ENCODE measurements at regions of chr5 and their contacts with region 1.

Region 1: GRCh38 chr5:43040287-43041098 is at the start of gene ANXA2R:
- DNase-seq: peak in 1 of 2 donors; percentile 93
- H3K4me3 ChIP-seq: peak within 1 kb of the TSS; percentile 64 to 91
- H3K27ac ChIP-seq: peak within 1 kb of the TSS; percentile 96 to 99
- H3K4me1 ChIP-seq: peaks cover 0 to 2% of the 10 kb centered on the region in 2 donors
- H3K27me3 ChIP-seq: no peaks in the 10 kb centered on the region
- CTCF ChIP-seq: peak; percentile 58 to 74 (median 66)
- total RNA-seq, gene ANXA2R: 5.1 TPM

Region 2: DNA sequence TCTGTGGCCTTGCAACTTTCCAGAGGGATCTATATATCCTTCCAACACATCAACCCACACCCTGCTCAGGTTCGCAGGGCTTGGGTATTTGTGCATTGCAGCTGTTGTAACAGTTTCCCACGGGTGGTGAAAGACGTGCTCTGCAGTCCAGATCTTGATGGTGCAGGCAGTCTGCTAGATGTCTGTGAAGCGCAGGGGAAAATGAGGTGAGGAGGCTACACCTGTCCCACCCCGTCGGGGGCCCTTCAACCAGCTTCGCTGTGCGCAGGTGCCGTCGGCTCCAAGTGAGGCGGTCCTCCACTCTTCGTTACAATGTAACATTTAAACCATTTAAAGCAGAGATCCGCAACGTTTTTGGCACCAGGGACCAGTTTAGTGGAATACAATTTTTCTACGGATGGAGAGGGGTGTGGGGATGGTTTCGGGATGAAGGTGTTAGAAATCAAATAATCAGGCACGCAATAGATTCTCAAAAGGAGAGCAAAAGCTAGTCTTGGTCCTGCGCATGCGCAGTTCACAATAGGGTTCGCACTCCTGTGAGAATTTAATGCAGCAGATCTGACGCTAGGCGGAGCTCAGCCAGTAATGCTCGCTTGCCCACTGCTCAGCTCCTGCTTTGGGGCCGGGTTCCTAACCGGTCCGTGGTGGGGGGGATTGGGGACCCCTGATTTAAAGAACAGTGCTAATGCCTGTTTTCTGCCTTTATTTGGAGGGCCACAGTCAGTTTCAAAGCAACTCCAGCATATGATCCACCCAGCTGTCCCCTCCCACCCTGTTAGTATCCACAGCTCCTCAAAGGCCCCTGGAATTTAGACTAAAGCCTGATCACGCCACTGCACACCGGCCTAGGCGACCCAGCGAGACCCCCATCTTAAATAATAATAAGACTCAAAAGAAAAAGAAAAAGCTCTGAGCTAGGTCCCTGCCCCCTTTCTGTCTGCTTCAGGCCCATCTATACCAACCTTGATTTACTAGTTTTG is 131.7 kb before region 1 on chr5:
- intact Hi-C with region 1: loop called (anchors 1 kb)
- DNase-seq: peak; percentile 50 to 94
- H3K4me3 ChIP-seq: peak overlapping the region; percentile 49 to 63
- H3K27ac ChIP-seq: no peak overlapping the region
- H3K4me1 ChIP-seq: peaks cover 0 to 5% of the 10 kb centered on the region in 2 donors
- H3K27me3 ChIP-seq: no peaks in the 10 kb centered on the region
- CTCF ChIP-seq: peak; percentile 76 to 87 (median 78)

Region 3: GRCh38 chr5:42994246-42995151 is 46.0 kb before region 1 on chr5:
- intact Hi-C with region 1: loop called (anchors 2 kb)
- DNase-seq: peak in 1 of 2 donors; percentile 94
- H3K4me3 ChIP-seq: peak overlapping the region; percentile 52 to 72
- H3K27ac ChIP-seq: peak overlapping the region; percentile 90 to 97
- H3K4me1 ChIP-seq: peaks cover 0 to 4% of the 10 kb centered on the region in 2 donors
- H3K27me3 ChIP-seq: no peaks in the 10 kb centered on the region
- CTCF ChIP-seq: peak; percentile 84 to 88 (median 85)

Region 4: GRCh38 chr5:43019614-43020293 is 20.7 kb before region 1 on chr5:
- intact Hi-C with region 1: loop called (anchors 1 kb)
- DNase-seq: peak in 1 of 2 donors; percentile 83
- H3K4me3 ChIP-seq: peak overlapping the region; percentile 71 to 75
- H3K27ac ChIP-seq: peak overlapping the region; percentile 43 to 49
- H3K4me1 ChIP-seq: no peaks in the 10 kb centered on the region
- H3K27me3 ChIP-seq: no peaks in the 10 kb centered on the region
- CTCF ChIP-seq: peak in 2 of 3 experiments; percentile 19 to 34

Region 5: DNA sequence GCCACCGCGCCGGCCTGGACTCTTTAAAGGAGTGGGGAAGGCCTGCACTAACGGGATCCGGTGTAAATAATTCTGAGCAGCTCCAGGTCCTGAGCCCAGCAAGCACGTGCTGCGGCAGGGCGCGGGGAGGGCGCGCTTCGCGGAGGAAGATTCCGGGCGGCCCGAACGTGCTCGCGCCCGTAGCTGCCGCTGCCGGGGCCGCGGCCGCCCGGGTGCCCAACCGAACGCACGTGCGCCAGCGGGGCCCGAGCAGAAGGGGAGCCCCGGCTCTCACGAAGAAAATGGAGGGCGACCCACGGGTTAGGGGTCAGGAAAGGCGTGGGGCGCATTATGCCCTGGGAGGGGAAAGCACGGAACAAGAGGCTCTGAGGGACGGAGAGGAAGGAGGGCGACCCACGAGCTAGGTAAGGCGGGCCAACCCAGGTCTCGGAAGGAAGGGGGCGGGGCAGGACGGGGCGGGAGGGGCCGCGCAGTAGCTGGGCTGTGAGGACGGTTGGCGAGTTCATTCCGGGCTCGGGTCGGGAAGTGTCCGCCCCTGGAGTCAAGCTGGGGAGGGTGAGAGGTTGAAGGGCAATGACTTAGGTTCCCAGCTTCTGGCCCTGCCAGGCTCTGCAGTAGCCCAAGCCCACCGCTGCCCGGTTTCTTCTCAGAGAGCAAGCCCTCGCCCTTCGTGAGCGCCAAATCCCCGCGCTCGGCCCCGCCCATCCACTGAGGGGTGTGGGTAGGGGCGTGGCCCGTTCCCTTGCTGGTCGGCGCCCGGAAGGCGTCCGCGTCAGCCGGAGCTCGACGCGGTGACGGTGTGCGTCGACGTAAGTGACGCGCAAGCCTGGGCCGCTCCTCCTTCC is 80.4 kb after region 1 on chr5 and contains the start of gene ZNF131:
- intact Hi-C with region 1: loop called (anchors 1 kb)
- DNase-seq: peak; percentile 84 to 98
- H3K4me3 ChIP-seq: peak within 1 kb of the TSS; percentile 85 to 87
- H3K27ac ChIP-seq: peak within 1 kb of the TSS; percentile 90 to 99
- H3K4me1 ChIP-seq: peaks cover 0 to 20% of the 10 kb centered on the region in 2 donors
- H3K27me3 ChIP-seq: no peaks in the 10 kb centered on the region
- CTCF ChIP-seq: peak in 1 of 3 experiments; percentile 19
- total RNA-seq, gene ZNF131: 61.2 TPM